ENCODE measurements at regions of chr3 and their contacts with region 1.

Region 1: GRCh38 chr3:133457465-133458067 is 57.7 kb downstream of the BFSP2 start:
- DNase-seq: no peak
- H3K4me3 ChIP-seq: no peak overlapping the region
- H3K4me1 ChIP-seq: no peaks in the 10 kb centered on the region; the same call in 1 of the 2 replicates
- H3K27me3 ChIP-seq: no peaks in the 10 kb centered on the region

Region 2: DNA sequence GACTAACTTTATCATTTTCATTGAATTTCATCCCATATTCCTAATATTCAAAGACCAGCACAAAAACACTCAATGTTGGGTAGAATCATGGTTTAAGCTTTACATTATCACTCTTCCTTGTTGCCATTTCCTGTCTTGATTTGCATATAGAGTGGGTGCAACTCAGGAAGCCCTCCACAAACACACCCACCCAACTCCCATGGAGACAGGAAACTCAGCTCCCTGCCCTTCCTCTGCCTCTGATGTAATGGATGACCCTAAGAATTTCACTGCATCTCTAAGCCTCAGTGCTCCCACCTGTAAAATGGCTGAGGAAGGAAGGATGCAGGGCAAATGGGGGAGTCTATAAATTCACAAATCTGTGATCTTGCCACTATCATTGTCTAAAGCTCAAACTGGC is 155.8 kb before region 1 on chr3:
- in situ Hi-C with region 1: no loop called
- DNase-seq: no peak
- H3K4me3 ChIP-seq: no peak overlapping the region
- H3K4me1 ChIP-seq: no peaks in the 10 kb centered on the region
- H3K27me3 ChIP-seq: no peaks in the 10 kb centered on the region

Region 3: DNA sequence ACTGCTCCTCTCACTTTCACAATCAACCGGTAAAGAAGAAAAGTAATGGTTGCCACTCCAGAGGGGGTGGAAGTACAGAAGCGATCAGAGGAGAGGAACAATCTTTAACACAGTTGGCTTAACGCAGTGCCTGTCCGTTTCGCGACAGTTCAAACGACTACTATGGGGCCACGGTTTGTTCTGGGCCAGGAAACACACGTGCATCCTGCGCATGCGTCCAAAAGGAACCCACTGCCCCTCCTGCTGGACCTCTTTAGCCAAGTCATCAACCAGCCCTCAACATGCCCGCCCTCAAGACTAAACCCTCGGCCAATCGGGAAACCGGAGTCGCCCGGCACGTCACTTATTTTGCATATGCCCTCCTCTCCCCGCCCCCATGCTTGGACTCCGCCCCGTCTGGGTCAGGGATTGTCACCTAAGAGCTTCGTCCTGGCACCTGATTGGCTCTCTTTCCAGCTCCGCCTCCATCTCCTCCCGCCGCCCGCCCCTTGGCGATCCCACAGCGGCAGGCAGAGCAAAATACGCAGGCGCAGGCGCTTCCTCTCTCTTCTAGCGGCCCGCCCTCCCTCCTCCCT is 115.6 kb after region 1 on chr3:
- in situ Hi-C with region 1: loop called (anchors 10 kb)
- DNase-seq: peak; percentile 98 to 100
- H3K4me3 ChIP-seq: peak overlapping the region; percentile 50
- H3K4me1 ChIP-seq: peaks cover 18% of the 10 kb centered on the region
- H3K27me3 ChIP-seq: no peaks in the 10 kb centered on the region

Measured in HAP-1 (cell line).